ENCODE measurements at regions of chr4 and their contacts with region 1.

Region 1: GRCh38 chr4:54227256-54228055 is 1.6 kb upstream of the PDGFRA start:
- DNase-seq: no peak
- ATAC-seq: no peak
- H3K4me3 ChIP-seq: no peak overlapping the region
- H3K4me3 Mint-ChIP-seq: peak overlapping the region; percentile 56 to 87 (median 76)
- H3K27ac ChIP-seq: no peak overlapping the region
- H3K27ac Mint-ChIP-seq: peak overlapping the region in 1 of 9 donors; percentile 21
- H3K4me1 ChIP-seq: peaks cover 8 to 28% of the 10 kb centered on the region in 2 donors
- H3K4me1 Mint-ChIP-seq: peaks cover 26 to 55% (median 38%) of the 10 kb centered on the region in 7 donors
- H3K27me3 ChIP-seq: peaks cover 5 to 20% of the 10 kb centered on the region in 2 donors
- H3K27me3 Mint-ChIP-seq: peaks cover 74 to 96% (median 89%) of the 10 kb centered on the region in 5 donors

Region 2: GRCh38 chr4:53908661-53909078 is 318.8 kb before region 1 on chr4:
- CTCF ChIA-PET with region 1: no interaction called
- POLR2A ChIA-PET with region 1: no interaction called
- intact Hi-C with region 1: loop called (anchors 1 kb)
- DNase-seq: peak in 4 of 9 donors; percentile 6 to 28 (median 18)
- ATAC-seq: peak; percentile 82
- H3K4me3 ChIP-seq: no peak overlapping the region
- H3K4me3 Mint-ChIP-seq: peak overlapping the region in 4 of 10 donors; percentile 9 to 45 (median 30)
- H3K27ac ChIP-seq: no peak overlapping the region
- H3K27ac Mint-ChIP-seq: no peak overlapping the region
- H3K4me1 ChIP-seq: no peaks in the 10 kb centered on the region
- H3K4me1 Mint-ChIP-seq: peaks cover 0 to 20% (median 12%) of the 10 kb centered on the region in 7 donors
- H3K27me3 ChIP-seq: no peaks in the 10 kb centered on the region
- H3K27me3 Mint-ChIP-seq: peaks cover 32 to 60% (median 48%) of the 10 kb centered on the region in 5 donors

Region 3: GRCh38 chr4:53962516-53963225 is 264.8 kb before region 1 on chr4:
- CTCF ChIA-PET with region 1: no interaction called
- POLR2A ChIA-PET with region 1: no interaction called
- intact Hi-C with region 1: no loop called
- DNase-seq: no peak
- ATAC-seq: no peak
- H3K4me3 ChIP-seq: no peak overlapping the region
- H3K4me3 Mint-ChIP-seq: no peak overlapping the region
- H3K27ac ChIP-seq: no peak overlapping the region
- H3K27ac Mint-ChIP-seq: no peak overlapping the region
- H3K4me1 ChIP-seq: no peaks in the 10 kb centered on the region
- H3K4me1 Mint-ChIP-seq: no peaks in the 10 kb centered on the region
- H3K27me3 ChIP-seq: no peaks in the 10 kb centered on the region
- H3K27me3 Mint-ChIP-seq: no peaks in the 10 kb centered on the region

Region 4: DNA sequence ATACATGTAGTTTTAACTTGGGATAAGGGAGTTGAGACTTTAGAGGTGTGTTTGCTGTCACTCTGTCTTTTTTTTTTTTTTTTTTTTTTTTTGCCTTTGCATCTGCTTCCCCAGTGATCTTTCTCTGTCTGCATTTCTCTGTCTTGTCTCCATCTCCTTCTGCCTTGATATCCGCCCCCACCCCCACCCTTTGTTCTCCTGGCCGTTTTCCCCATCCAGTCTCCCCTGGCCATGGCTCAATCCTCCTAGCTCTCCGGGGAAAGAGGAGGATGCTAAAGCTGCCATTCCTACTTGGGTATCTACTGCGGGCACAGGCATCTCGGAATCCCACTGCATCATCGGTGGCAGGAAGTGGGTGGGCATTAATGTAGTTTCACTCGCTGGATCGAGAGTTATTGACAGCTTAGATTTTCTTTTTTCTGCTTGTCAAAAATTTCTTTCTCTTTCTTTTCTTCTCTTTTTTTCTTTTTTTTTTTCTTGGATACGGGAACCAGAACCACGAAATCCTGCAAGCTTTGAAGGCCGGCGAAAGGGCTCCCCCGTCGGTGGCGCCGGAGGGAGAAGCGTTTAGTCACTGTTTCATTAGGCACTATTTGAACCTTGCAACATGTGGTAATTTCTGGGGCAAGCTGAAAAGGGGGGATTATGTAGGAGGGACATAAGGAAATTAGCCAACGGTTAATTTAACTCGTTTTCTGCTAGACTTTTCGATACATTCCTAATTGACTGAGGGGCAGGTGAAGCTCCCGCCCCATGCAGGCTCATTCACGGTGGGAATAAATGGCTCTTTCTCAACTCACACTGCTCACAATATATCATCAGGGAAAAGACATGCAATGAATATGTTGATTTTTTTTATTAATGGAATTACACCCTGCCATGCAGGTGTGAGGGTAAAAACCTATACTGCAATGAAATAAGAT is 119.2 kb before region 1 on chr4:
- CTCF ChIA-PET with region 1: no interaction called
- POLR2A ChIA-PET with region 1: no interaction called
- intact Hi-C with region 1: loop called in 1 of 2 experiments (anchors 2 kb)
- DNase-seq: no peak
- ATAC-seq: no peak
- H3K4me3 ChIP-seq: peak overlapping the region; percentile 7
- H3K4me3 Mint-ChIP-seq: peak overlapping the region; percentile 17 to 86 (median 76)
- H3K27ac ChIP-seq: no peak overlapping the region
- H3K27ac Mint-ChIP-seq: peak overlapping the region in 1 of 9 donors; percentile 10
- H3K4me1 ChIP-seq: peaks cover 5 to 16% of the 10 kb centered on the region in 2 donors
- H3K4me1 Mint-ChIP-seq: peaks cover 16 to 47% (median 31%) of the 10 kb centered on the region in 7 donors
- H3K27me3 ChIP-seq: peaks cover 4 to 46% of the 10 kb centered on the region in 2 donors
- H3K27me3 Mint-ChIP-seq: peaks cover 74 to 87% (median 80%) of the 10 kb centered on the region in 5 donors

Region 5: DNA sequence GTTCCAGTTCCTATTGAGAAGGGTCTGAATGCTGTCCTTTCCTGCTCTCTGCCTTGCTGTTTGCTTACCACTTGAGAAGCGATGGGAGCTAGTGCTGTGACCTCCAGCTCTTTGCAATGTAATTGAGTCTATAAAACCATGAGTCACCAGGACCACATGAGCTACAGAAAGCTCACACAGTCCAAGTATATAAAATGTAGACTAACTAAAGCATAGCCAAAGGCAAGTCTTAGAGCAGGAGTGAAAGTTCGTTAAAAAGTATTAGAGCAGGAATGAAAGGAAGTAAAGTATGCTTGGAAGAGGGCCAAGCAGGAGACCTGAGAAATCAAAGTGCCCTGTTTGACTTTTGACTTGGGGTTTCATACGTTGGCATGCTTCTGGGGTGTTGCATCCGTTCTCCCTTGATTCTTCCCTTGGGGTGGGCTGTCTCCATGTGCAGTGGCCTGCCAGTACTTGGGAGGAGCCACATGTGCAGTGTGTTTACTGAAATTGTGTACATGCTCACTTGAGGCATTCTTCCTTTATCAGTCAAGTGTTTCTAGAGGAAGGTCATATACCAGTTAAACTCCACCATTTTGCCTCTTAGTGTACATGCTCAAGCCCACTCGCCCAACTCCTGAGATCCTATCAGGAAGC is 359.0 kb after region 1 on chr4:
- CTCF ChIA-PET with region 1: no interaction called
- POLR2A ChIA-PET with region 1: no interaction called
- intact Hi-C with region 1: no loop called
- DNase-seq: no peak
- ATAC-seq: no peak
- H3K4me3 ChIP-seq: no peak overlapping the region
- H3K4me3 Mint-ChIP-seq: no peak overlapping the region
- H3K27ac ChIP-seq: no peak overlapping the region
- H3K27ac Mint-ChIP-seq: no peak overlapping the region
- H3K4me1 ChIP-seq: no peaks in the 10 kb centered on the region
- H3K4me1 Mint-ChIP-seq: no peaks in the 10 kb centered on the region
- H3K27me3 ChIP-seq: no peaks in the 10 kb centered on the region
- H3K27me3 Mint-ChIP-seq: peaks cover 4 to 26% (median 15%) of the 10 kb centered on the region in 5 donors

Region 6: DNA sequence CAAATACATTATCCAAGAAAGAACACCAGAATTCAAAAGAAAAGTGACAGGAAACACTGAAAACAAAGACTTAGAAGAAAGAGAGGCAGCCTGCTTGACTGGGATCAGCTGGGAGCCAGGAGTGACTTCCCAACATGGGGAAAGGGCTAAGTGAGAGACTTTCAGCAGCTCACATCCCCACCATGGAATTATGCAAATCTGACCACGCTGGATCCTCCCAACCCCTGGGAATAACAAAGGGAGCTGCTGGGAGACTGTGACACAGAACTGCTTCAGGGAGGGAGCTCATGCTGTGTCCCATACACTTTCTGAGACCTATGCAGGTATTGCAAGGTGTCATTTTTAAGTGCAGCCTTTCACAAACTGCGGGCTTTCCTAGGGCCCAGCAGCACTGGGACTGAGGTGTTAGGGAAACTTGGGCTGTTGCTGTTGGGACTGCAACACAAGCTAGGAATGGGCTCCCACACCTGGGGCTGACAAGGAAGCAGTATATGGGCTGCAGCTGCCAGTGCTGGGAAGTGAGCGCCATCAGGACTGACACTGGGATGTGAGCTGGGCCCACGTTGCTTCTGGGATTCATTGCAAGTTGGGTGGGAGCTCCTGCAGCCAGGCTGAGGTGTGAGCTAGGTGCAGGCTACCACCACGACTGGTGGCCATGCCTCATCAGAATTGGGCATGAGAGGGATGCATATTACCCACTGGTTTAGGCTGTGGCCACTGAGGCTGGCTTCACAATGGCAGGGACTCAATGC is 758.8 kb after region 1 on chr4:
- CTCF ChIA-PET with region 1: no interaction called
- POLR2A ChIA-PET with region 1: no interaction called
- intact Hi-C with region 1: no loop called
- DNase-seq: no peak
- ATAC-seq: no peak
- H3K4me3 ChIP-seq: no peak overlapping the region
- H3K4me3 Mint-ChIP-seq: no peak overlapping the region
- H3K27ac ChIP-seq: no peak overlapping the region
- H3K27ac Mint-ChIP-seq: no peak overlapping the region
- H3K4me1 ChIP-seq: no peaks in the 10 kb centered on the region
- H3K4me1 Mint-ChIP-seq: no peaks in the 10 kb centered on the region
- H3K27me3 ChIP-seq: no peaks in the 10 kb centered on the region
- H3K27me3 Mint-ChIP-seq: peaks cover 5 to 19% (median 14%) of the 10 kb centered on the region in 5 donors

Measured in naive thymus-derived CD4-positive, alpha-beta T cell (primary cell).